Mammary epithelial cell (primary cell): ENCODE measurements at regions of chr2 and their contacts with region 1.

Region 1: GRCh38 chr2:70014959-70015358 is 53.5 kb upstream of the ASPRV1 start:
- DNase-seq: no peak
- H3K4me3 ChIP-seq: no peak overlapping the region
- H3K27ac ChIP-seq: no peak overlapping the region
- H3K4me1 ChIP-seq: no peaks in the 10 kb centered on the region
- H3K27me3 ChIP-seq: no peaks in the 10 kb centered on the region
- CTCF ChIP-seq: no peak

Region 2: DNA sequence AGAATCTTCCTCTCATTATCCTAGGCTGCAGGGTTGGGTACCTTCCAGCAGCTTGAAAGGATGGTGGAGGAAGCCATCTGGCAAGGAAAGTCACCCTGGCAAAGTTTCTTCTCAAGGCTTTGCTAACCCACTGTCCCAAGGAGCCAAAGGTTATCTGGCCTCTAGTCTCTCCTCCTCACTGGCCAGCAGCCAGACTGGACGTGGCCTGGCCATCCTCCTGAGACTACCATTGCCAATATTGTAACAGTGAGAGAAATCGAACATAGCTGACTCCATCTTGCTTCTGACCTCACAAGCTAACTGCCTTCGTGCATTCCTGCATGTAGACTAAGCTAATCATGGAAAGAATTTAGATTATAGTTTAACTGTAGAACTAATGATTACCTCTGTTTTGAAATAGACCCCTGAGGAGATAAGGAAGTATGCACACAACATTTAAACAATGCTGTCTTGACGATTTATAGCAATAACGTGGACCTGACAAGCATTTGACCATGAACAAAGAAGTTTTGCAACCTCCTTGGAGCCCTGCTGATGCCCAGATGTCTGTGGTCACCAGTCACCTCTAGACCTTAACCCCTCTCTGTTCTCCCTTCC is 280.8 kb before region 1 on chr2:
- CTCF ChIA-PET with region 1: no interaction called
- dilution Hi-C with region 1: no loop called
- in situ Hi-C with region 1: no loop called
- intact Hi-C with region 1: no loop called
- DNase-seq: no peak
- H3K4me3 ChIP-seq: no peak overlapping the region
- H3K27ac ChIP-seq: no peak overlapping the region
- H3K4me1 ChIP-seq: no peaks in the 10 kb centered on the region
- H3K27me3 ChIP-seq: no peaks in the 10 kb centered on the region
- CTCF ChIP-seq: no peak

Region 3: GRCh38 chr2:69975500-69976462 is 39.2 kb before region 1 on chr2:
- CTCF ChIA-PET with region 1: no interaction called
- dilution Hi-C with region 1: loop called (anchors 5 kb)
- in situ Hi-C with region 1: no loop called
- intact Hi-C with region 1: no loop called
- DNase-seq: no peak
- H3K4me3 ChIP-seq: no peak overlapping the region
- H3K27ac ChIP-seq: no peak overlapping the region
- H3K4me1 ChIP-seq: no peaks in the 10 kb centered on the region
- H3K27me3 ChIP-seq: no peaks in the 10 kb centered on the region
- CTCF ChIP-seq: no peak